Right ventricle myocardium inferior (tissue), 1 donor: ENCODE measurements at regions of chr5 and their contacts with region 1.

Region 1: GRCh38 chr5:59174248-59174844 is 591.5 kb downstream of the RAB3C start:
- DNase-seq: no peak
- ATAC-seq: peak; percentile 79

Region 2: GRCh38 chr5:58759745-58760144 is 414.6 kb before region 1 on chr5:
- intact Hi-C with region 1: no loop called
- DNase-seq: no peak
- ATAC-seq: peak; percentile 76

Region 3: GRCh38 chr5:59039296-59040023 is 134.9 kb before region 1 on chr5:
- intact Hi-C with region 1: loop called (anchors 1 kb)
- DNase-seq: peak; percentile 96
- ATAC-seq: peak; percentile 73

Region 4: DNA sequence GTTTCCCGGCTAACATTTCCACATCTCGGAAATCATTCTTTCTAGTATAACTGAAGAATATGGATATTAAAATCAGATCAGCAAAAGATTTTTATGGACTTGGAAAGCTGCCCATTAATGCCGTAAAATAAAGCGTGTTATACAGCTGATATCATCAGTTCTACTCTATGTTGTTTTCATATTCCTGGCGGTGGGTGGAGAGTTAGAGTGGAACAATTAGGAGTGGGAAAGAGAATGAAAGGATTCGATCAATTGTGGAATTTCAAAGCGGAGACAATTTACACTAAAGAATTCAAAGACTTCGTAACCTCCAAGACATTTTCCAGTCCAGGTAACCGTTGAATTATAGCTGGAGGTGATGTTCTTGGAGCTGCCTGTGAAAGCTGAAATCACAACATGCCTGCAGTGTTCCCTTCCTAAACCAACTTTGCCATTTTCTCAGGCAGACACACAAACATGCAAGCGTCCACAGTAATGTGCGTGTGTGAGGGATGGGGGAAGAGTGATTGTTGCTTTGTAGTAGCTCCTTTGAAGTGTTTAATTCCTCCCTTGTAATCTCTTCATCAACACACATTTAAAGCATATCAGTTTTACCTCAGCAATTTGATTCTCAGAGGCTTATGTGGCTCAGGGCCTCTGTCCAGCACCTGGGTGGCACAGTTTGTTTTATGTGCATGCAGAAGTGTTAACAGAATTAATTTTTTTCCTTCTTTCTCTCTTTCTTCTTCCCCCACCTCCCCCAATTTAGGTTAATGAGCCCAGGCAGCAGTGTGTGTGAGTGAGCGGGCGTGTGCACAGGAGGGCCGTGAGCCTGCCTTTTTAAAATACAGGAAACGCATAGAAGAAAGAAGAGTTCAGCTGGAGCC is 47.4 kb before region 1 on chr5:
- intact Hi-C with region 1: loop called (anchors 5 kb)
- DNase-seq: no peak
- ATAC-seq: no peak